Esophagus squamous epithelium (tissue), 5 donors: ENCODE measurements at regions of chr3 and their contacts with region 1.

Region 1: DNA sequence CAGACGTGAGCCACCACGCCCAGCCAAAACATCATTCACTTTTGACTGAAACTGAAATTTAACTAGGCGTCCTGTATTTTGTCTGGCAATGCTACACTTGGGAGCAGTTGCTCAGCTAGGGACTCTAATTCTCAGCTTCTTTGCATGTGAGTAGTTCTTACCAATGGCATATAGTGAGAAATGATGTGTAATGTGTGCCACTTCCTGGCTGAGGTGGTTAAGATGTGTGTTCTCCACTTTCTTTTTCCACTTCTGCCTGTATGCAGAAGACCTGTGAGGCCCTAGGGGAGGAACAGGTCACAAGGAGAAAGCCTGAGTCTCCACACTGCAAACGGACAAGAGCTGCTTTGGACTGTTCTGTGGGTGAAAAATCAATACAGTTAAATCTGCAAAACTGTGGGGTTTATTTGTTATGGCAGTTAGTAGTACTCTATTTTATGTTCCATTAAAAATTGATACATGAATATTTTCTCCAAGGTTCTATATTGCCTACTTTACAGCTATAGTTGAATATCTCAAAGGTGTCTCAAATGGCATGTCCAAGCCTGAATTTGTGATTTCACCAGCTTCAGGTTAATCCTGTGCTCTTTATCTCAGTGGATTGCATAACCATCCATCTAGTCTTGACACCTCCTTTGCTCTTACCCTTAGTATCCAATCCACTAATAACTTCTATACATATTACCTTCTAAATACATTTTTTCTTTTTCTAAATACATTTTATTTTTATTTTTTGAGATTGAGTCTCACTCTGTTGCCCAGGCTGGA is 59.3 kb downstream of the NR1D2 start:
- DNase-seq: no peak
- H3K4me3 ChIP-seq: no peak overlapping the region
- H3K27ac ChIP-seq: peak overlapping the region; percentile 16 to 63 (median 37)
- H3K4me1 ChIP-seq: peaks cover 4 to 27% (median 17%) of the 10 kb centered on the region in 3 donors
- H3K27me3 ChIP-seq: no peaks in the 10 kb centered on the region
- CTCF ChIP-seq: no peak
- POLR2A ChIP-seq: no peak

Region 2: GRCh38 chr3:24128195-24129005 is 124.0 kb after region 1 on chr3:
- intact Hi-C with region 1: no loop called
- DNase-seq: no peak
- H3K4me3 ChIP-seq: no peak overlapping the region
- H3K27ac ChIP-seq: peak overlapping the region; percentile 57 to 68 (median 62)
- H3K4me1 ChIP-seq: peaks cover 0 to 36% (median 15%) of the 10 kb centered on the region in 3 donors
- H3K27me3 ChIP-seq: no peaks in the 10 kb centered on the region
- CTCF ChIP-seq: no peak
- POLR2A ChIP-seq: no peak

Region 3: DNA sequence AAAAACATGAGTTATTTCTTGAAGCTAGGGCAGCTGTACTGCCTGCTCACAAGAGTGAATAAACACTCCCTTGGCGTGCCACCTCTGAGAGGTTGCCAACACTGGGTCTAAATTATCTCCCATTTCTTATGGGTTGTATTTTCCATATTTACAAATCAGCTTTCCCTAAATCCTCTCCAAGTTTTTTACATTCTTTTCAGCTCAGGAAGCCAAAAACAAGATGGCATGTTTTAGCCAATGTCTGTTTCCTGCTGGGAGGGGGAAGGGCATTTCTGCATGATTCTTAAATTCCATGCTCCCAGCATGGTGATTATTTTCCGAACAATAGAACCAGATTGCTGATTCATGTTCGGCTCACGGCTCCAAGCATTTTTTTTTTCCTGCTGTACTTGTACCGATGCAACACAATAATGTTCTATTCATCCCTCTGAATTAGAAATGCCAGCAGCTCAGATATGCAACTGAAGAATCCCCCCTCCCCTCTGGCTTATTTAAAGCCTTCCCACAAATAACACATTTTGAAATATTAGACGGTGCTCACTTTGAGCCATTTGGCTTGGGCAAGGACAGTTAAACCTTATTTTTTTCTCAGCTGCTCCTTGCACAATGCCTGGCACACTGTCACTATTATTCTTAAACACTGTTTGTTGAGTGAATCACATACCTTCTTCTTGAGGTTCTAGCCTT is 237.8 kb after region 1 on chr3:
- intact Hi-C with region 1: loop called (anchors 5 kb)
- DNase-seq: no peak
- H3K4me3 ChIP-seq: no peak overlapping the region
- H3K27ac ChIP-seq: peak overlapping the region in 3 of 4 donors; percentile 58 to 81 (median 69)
- H3K4me1 ChIP-seq: peaks cover 7 to 36% (median 24%) of the 10 kb centered on the region in 3 donors
- H3K27me3 ChIP-seq: no peaks in the 10 kb centered on the region
- CTCF ChIP-seq: no peak
- POLR2A ChIP-seq: no peak